ENCODE measurements at regions of chr12 and their contacts with region 1.

Region 1: DNA sequence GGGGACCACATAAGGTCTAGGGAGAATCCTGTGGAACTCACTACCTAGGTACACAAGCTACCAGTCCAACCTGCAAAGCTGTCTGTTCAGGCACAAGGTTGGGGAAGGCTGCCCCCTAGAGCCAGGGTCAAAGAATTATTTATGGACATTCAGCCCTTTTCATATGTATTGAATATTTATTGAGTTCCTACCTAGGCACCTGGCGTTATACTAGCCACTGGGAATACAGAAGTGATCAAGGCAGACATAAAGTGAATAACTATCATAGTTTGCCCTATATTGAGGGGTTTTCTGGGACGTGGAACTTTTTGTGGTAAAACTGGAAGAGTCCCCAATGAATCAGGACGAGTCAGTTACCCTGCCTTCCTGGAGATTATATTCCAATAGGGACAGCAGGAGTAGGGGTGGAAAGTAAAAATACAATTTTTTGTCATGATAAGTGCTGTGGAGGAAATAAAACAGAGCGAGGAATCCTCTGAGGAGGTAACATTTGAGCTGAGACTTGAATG is 5.8 kb upstream of the SLC48A1 start:
- DNase-seq: peak; percentile 77
- ATAC-seq: peak; percentile 80
- H3K4me3 Mint-ChIP-seq: no peak overlapping the region
- H3K27ac Mint-ChIP-seq: no peak overlapping the region
- H3K4me1 Mint-ChIP-seq: peaks cover 13% of the 10 kb centered on the region
- H3K27me3 Mint-ChIP-seq: no peaks in the 10 kb centered on the region
- CTCF ChIP-seq: peak; percentile 89

Region 2: DNA sequence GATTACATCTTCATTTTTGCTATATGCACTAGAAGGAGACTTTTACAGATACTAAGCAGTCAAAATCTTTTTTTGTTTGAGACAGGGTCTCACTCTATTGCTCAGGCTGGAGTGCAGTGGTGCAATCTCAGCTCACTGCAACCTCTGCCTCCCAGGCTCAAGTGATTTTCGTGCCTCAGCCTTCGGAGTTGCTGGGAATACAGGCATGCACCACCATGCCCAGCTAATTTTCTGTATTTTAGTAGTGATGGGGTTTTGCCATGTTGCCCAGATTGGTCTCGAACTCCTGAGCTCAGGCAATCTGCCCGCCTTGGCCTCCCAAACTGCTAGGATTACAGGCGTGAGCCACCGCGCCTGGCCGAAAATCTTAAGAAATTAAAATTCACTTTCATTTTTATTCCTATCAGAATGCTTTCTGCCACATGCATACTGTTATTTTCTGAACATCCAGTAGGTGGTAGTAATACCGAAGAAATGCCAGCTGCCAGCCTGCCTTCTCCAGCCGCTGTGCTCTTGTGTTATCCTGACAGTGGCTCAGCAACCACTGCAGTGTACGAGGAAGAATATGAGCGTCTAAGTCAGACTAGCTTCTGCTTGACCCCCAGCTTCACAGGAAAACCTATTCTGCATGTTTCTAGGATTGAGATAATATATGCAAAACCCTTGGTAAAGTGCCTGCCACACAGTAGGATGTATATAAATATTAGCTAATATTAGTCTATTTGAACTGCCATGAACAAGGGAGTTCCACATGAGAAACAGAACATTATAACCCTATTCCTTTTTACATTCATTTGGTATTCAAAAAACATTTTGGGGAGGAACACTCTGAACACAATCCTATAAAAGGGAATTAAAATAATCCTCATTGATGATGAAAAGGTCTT is 115.7 kb before region 1 on chr12:
- CTCF ChIA-PET with region 1: interaction called, 10 read pairs
- POLR2A ChIA-PET with region 1: no interaction called
- intact Hi-C with region 1: no loop called
- DNase-seq: peak; percentile 62
- ATAC-seq: peak; percentile 98
- H3K4me3 Mint-ChIP-seq: no peak overlapping the region
- H3K27ac Mint-ChIP-seq: no peak overlapping the region
- H3K4me1 Mint-ChIP-seq: peaks cover 12% of the 10 kb centered on the region
- H3K27me3 Mint-ChIP-seq: no peaks in the 10 kb centered on the region
- CTCF ChIP-seq: peak; percentile 81

Region 3: GRCh38 chr12:47715393-47715876 is 51.8 kb before region 1 on chr12:
- CTCF ChIA-PET with region 1: interaction called, 116 read pairs
- POLR2A ChIA-PET with region 1: no interaction called
- intact Hi-C with region 1: no loop called
- DNase-seq: peak; percentile 91
- ATAC-seq: peak; percentile 88
- H3K4me3 Mint-ChIP-seq: no peak overlapping the region
- H3K27ac Mint-ChIP-seq: no peak overlapping the region
- H3K4me1 Mint-ChIP-seq: peaks cover 19% of the 10 kb centered on the region
- H3K27me3 Mint-ChIP-seq: no peaks in the 10 kb centered on the region
- CTCF ChIP-seq: peak; percentile 71

Region 4: DNA sequence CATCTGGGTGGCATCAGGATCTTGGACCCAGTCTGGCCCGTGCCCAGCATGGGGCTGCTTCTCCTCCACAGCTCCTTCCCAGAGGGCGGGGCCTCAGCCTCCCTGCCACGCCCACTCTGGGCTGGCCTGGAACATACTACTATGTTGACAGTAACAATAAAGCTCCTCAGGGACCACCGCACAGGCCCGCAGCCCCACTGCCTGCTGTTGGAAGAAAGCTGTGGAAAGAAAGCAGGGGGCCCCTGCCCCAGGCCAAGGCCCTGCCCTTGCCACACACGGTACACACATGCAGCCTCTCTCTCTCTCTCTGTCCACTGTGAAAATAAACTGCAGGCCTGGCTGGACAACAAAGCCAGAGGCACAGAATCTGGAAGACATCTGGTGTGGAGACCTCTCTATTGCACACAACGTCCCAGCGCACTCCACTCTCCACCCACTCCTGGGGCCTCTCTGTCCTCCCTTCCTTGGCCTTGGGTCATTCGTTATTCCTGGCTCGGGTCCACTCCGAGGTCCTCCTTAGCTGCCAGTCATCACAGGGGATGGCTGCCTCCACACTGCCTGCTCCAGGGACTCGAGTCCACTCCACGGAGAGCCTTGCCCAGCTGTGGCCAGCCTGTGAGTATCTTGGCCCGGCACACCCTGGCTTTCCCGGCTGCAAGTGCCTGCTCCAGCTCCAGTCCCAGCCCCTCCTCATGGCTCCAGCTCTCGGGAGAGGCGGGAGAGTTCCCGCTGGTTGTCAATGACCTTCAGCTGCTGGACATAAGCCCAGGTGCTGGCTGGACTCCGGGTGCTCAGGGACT is 30.2 kb before region 1 on chr12:
- CTCF ChIA-PET with region 1: interaction called, 685 read pairs
- POLR2A ChIA-PET with region 1: interaction called, 11 read pairs
- intact Hi-C with region 1: loop called (anchors 2 kb)
- DNase-seq: no peak
- ATAC-seq: no peak
- H3K4me3 Mint-ChIP-seq: no peak overlapping the region
- H3K27ac Mint-ChIP-seq: no peak overlapping the region
- H3K4me1 Mint-ChIP-seq: peaks cover 23% of the 10 kb centered on the region
- H3K27me3 Mint-ChIP-seq: no peaks in the 10 kb centered on the region
- CTCF ChIP-seq: no peak

Region 5: DNA sequence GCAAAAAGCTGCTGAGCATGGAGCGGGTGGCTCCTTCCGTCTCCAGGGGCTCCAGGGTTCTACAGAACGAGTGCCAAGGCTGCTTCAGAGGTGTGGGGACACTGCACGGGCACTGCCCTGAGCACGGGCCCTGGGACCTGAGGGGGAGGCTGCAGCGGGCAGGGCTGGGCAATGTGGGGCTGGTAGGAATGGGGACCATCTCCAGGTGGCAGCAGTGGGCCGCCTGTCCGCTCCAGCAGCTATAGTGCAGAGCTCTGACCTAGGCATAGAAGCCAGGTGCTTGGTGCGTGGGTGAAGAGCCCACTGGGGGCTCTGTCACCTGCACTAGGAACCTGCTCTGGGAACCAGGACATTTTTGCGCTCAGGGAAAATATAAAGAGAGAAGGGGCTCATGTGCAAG is 30.2 kb after region 1 on chr12:
- CTCF ChIA-PET with region 1: interaction called, 10 read pairs
- POLR2A ChIA-PET with region 1: no interaction called
- intact Hi-C with region 1: no loop called
- DNase-seq: peak; percentile 56
- ATAC-seq: peak; percentile 57
- H3K4me3 Mint-ChIP-seq: no peak overlapping the region
- H3K27ac Mint-ChIP-seq: peak overlapping the region; percentile 46
- H3K4me1 Mint-ChIP-seq: peaks cover 41% of the 10 kb centered on the region
- H3K27me3 Mint-ChIP-seq: no peaks in the 10 kb centered on the region
- CTCF ChIP-seq: peak; percentile 19